ENCODE measurements at regions of chr2 and their contacts with region 1.

Region 1: GRCh38 chr2:10043906-10044601 is 704 bp downstream of the KLF11 start:
- DNase-seq: peak; percentile 75
- ATAC-seq: peak; percentile 75
- H3K4me3 ChIP-seq: peak overlapping the region; percentile 6 to 30; a peak in 1 of 4 replicates
- H3K27ac ChIP-seq: peak overlapping the region; percentile 82
- H3K4me1 ChIP-seq: peaks cover 3 to 15% of the 10 kb centered on the region in 2 experiments; a peak in 1 of 4 replicates
- H3K27me3 ChIP-seq: no peaks in the 10 kb centered on the region
- CTCF ChIP-seq: no peak
- POLR2A ChIP-seq: no peak
- RAD21 ChIP-seq: no peak

Region 2: DNA sequence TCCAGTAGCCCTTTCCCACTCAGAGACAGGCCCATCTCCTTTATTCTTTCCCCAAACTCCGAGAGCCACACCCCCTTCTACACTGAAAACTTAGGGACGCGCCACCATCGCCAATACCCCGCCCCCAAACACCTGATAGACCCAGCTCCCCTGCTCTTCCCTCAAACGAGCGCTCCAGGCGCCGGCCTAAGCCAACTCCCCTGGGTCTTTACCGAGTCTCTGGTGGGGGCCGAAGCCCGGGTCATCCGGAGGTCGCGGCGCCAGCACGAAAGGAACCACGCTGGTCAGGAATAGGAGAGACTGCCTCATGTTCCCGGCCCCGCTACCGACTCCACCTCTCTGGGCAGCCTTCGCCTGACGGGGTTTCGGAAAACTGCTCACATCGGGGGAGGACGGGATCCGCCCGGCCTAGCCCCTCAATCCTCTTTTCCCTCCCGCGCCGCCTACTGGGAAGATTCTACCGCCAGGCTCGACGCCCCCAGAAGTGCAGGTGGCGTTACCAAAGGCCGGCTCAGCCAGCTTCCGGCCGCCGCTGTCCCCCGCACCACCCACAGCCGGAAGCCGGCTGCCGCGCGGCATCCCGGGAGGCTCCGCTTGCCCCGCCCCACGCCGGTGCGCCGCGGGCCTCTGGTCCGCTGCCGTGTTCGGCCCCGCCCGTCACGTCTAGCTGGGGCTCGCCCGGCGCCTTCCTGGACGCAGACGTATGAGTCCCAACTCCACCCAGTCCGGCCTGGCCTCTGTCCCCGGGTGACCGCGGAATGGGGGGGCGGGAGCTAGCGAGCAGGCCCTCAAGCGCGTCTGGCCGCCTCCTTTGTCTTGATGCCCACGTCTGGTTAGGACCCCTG is 488.5 kb before region 1 on chr2 and contains the start of gene ADAM17:
- CTCF ChIA-PET with region 1: no interaction called
- POLR2A ChIA-PET with region 1: no interaction called
- RAD21 ChIA-PET with region 1: no interaction called
- intact Hi-C with region 1: loop called (anchors 10 kb)
- DNase-seq: peak; percentile 88
- ATAC-seq: peak; percentile 93
- H3K4me3 ChIP-seq: peak within 1 kb of the TSS; percentile 84 to 91
- H3K27ac ChIP-seq: peak within 1 kb of the TSS; percentile 90
- H3K4me1 ChIP-seq: peaks cover 36 to 65% of the 10 kb centered on the region in 2 experiments
- H3K27me3 ChIP-seq: no peaks in the 10 kb centered on the region
- CTCF ChIP-seq: peak in 1 of 3 experiments; percentile 45; a peak in 3 of 6 replicates
- POLR2A ChIP-seq: peak; percentile 77
- RAD21 ChIP-seq: peak; percentile 15; the same call in 1 of the 2 replicates
- total RNA-seq, gene ADAM17: 39.2 TPM

Region 3: DNA sequence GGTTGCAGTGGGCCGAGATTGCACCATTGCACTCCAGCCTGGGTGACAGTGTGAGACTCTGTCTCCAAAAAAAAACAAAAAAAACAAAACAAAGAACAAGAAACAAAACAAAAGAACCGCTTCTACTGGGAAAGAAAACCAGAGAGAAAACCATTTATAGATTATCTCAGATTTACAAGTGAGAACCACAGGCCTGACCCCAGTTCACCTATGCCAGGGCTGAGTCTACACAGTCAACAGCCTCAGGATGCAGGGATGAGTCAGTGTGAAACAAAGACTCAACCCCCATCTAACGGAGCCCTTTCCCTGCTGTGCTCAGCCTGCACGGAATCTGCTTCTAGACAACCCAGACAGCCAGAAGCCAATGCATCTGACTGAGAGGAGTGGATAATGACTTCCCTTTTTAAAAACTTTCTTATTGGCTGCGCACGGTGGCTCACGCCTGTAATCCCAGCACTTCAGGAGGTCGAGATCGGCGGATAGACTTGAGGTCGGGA is 387.7 kb before region 1 on chr2:
- CTCF ChIA-PET with region 1: no interaction called
- POLR2A ChIA-PET with region 1: no interaction called
- RAD21 ChIA-PET with region 1: no interaction called
- intact Hi-C with region 1: no loop called
- DNase-seq: no peak
- ATAC-seq: peak; percentile 67; the same call in 1 of the 2 replicates
- H3K4me3 ChIP-seq: no peak overlapping the region
- H3K27ac ChIP-seq: no peak overlapping the region
- H3K4me1 ChIP-seq: peaks cover 0 to 7% of the 10 kb centered on the region in 2 experiments; a peak in 1 of 4 replicates
- H3K27me3 ChIP-seq: peaks cover 3% of the 10 kb centered on the region; the same call in 1 of the 2 replicates
- CTCF ChIP-seq: no peak
- POLR2A ChIP-seq: no peak
- RAD21 ChIP-seq: no peak

Region 4: DNA sequence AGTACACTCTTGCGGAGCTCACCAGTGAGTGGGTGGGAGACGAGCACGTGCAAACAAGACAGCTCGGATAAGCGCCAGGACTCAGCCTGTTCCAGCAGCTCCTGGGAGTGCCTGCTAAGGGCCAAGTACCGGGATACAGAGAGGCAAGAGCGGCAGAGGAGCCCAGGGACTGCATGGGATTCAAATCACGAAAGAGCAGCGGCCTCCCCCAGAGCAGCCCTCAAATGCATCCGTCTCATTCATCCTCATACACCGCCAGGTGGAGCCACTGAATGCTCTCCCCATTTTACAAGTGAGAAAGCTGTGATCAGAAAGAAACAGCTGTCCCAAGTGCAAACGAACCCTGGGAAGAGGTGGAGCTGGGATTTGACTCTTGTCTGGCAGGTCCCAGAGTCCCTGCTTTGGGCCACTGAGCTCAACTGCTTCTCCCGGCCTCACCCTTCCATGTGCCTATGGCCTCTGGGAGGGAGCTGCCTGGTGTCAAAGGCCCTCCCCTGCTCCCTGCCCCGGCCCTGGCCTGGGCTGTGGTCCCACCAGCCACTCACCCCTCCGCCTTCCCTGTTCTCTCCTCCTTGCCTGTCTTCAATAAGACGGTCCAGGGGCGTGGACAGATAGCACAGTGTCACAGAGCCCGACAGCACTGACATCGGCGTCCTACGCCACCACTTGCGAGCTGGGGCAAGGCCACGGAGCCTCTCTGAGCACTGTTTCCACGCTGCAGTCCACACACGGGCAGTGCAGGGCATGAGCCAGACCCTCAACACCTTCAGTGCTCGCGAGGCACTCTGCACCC is 273.6 kb before region 1 on chr2:
- CTCF ChIA-PET with region 1: interaction called, 18 read pairs
- POLR2A ChIA-PET with region 1: no interaction called
- RAD21 ChIA-PET with region 1: no interaction called
- intact Hi-C with region 1: no loop called
- DNase-seq: peak; percentile 42
- ATAC-seq: peak; percentile 87
- H3K4me3 ChIP-seq: no peak overlapping the region
- H3K27ac ChIP-seq: no peak overlapping the region; the same call in 1 of the 2 replicates
- H3K4me1 ChIP-seq: peaks cover 17 to 29% of the 10 kb centered on the region in 2 experiments; a peak in 3 of 4 replicates
- H3K27me3 ChIP-seq: no peaks in the 10 kb centered on the region
- CTCF ChIP-seq: peak; percentile 69 to 80 (median 73)
- POLR2A ChIP-seq: no peak
- RAD21 ChIP-seq: peak; percentile 74

Region 5: GRCh38 chr2:9799665-9800632 is 244.1 kb before region 1 on chr2:
- CTCF ChIA-PET with region 1: interaction called, 36 read pairs
- POLR2A ChIA-PET with region 1: no interaction called
- RAD21 ChIA-PET with region 1: interaction called, 4 to 5 read pairs
- intact Hi-C with region 1: loop called (anchors 1 kb)
- DNase-seq: peak; percentile 72
- ATAC-seq: peak; percentile 84
- H3K4me3 ChIP-seq: no peak overlapping the region
- H3K27ac ChIP-seq: peak overlapping the region; percentile 75; the same call in 1 of the 2 replicates
- H3K4me1 ChIP-seq: peaks cover 31 to 48% of the 10 kb centered on the region in 2 experiments
- H3K27me3 ChIP-seq: no peaks in the 10 kb centered on the region
- CTCF ChIP-seq: peak in 2 of 3 experiments; percentile 97 to 99; a peak in 4 of 6 replicates
- POLR2A ChIP-seq: no peak
- RAD21 ChIP-seq: no peak

Region 6: DNA sequence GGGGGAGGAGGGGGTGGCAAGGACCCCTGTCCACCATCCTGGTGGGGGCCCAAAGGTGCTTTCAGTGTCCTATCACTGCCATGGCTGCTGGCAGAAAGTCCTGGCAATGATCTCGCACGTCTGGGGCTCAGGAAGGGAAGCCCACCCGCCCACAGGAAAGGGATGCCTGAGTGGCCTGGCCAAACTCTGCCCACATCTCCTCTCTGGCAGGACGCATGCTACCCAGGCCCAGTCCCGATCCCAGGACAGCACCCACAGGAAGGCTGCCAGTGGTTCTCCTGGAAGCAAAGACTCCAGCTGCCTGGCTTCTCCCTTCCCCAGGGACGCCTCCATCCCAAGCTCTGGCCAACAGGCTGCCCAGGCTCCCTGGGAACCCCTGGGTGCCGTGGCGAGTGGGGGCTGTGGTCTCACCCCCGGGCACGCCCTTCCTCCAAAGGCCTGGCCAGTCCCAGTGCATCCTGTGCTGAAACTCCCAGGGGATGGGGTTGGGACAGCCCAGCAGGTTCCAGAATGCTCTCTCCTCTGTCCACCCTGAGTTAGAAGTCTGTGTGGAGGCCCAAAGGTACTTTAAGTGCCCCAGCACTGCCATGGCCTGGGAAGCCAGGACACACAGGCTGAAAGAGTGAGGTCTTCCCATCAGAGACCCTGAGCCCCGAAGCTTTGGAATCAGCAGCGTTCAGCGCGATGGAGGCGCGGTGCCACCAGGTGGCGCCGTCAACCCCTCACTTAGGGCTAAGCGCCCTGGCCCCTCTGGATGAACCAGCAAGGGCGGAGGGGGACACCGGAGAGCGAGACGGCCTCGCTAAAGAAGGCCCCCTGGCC is 230.5 kb before region 1 on chr2:
- CTCF ChIA-PET with region 1: interaction called, 18 read pairs
- POLR2A ChIA-PET with region 1: no interaction called
- RAD21 ChIA-PET with region 1: no interaction called
- intact Hi-C with region 1: loop called (anchors 1 kb)
- DNase-seq: no peak
- ATAC-seq: peak; percentile 97
- H3K4me3 ChIP-seq: peak overlapping the region; percentile 11 to 16
- H3K27ac ChIP-seq: no peak overlapping the region
- H3K4me1 ChIP-seq: peaks cover 7 to 19% of the 10 kb centered on the region in 2 experiments; a peak in 3 of 4 replicates
- H3K27me3 ChIP-seq: no peaks in the 10 kb centered on the region
- CTCF ChIP-seq: peak; percentile 89 to 94 (median 93)
- POLR2A ChIP-seq: no peak
- RAD21 ChIP-seq: peak; percentile 98

Region 7: DNA sequence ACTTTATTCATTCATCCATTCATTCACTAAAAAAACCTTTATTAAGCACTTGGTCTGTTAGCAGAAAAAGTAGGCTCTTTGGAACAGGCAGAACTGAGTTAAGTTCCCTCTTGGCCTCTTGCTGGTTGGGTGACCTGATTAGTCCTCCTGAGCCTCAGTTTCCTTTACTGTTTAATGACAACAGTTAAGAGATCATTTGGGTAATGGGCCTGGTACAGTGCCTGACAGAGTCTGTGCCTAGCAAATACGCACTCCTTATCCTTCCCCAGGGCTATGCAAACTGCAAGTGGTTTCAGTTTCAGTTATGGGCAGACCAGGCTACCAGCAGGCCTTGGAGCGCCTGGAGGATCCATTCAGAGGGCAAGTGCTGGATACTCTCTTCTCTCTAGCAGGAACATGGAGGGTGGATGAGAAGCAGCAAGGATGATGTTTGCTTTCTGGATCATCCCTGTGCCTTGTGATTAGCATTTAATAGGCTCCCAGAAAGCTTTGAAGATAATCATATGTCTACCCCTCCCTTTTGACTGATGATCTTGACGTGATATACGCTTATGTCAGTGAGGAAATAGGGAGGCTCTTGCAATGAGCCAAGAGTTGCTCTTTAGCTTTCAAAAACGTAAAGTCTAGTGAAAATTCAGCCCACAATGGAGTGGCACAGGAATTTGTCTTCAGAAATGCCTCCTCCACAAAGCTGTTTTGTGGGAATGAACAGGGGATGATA is 213.2 kb before region 1 on chr2:
- CTCF ChIA-PET with region 1: no interaction called
- POLR2A ChIA-PET with region 1: no interaction called
- RAD21 ChIA-PET with region 1: no interaction called
- intact Hi-C with region 1: no loop called
- DNase-seq: no peak
- ATAC-seq: peak; percentile 62
- H3K4me3 ChIP-seq: peak overlapping the region in 1 of 2 experiments; percentile 34; a peak in 2 of 4 replicates
- H3K27ac ChIP-seq: peak overlapping the region; percentile 52
- H3K4me1 ChIP-seq: peaks cover 24 to 38% of the 10 kb centered on the region in 2 experiments
- H3K27me3 ChIP-seq: no peaks in the 10 kb centered on the region
- CTCF ChIP-seq: no peak
- POLR2A ChIP-seq: no peak
- RAD21 ChIP-seq: no peak

Region 8: DNA sequence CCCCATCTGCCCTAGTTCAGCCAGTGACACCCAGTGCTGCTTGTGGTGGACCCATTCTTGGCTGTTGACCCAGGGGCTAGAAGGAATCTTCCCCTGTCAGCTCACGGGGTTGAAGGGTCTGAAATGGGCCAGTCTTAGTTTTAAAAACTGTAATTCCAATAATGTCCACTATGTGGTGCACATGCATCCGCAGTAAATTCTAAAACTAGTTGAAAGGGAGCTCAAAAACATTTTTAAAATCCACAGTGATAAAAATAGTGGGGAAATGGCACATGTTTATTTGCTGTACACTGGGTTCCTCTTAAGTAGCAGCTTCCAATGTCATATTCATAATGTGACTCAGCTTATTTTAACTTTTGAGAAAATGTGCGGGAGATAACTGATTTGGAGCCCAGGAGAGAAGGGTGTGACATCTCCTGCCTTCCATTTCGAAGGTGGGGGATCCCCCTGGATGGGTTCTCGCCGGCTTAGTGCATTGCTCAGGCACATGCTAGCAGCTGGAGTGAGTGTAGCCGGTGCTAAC is 59.8 kb before region 1 on chr2:
- CTCF ChIA-PET with region 1: interaction called, 15 read pairs
- POLR2A ChIA-PET with region 1: no interaction called
- RAD21 ChIA-PET with region 1: no interaction called
- intact Hi-C with region 1: no loop called
- DNase-seq: peak; percentile 47
- ATAC-seq: peak; percentile 86
- H3K4me3 ChIP-seq: no peak overlapping the region
- H3K27ac ChIP-seq: no peak overlapping the region
- H3K4me1 ChIP-seq: peaks cover 10 to 22% of the 10 kb centered on the region in 2 experiments
- H3K27me3 ChIP-seq: no peaks in the 10 kb centered on the region
- CTCF ChIP-seq: peak; percentile 52 to 81 (median 53); a peak in 5 of 6 replicates
- POLR2A ChIP-seq: no peak
- RAD21 ChIP-seq: peak; percentile 65

Region 9: GRCh38 chr2:10057231-10058107 is 13.4 kb after region 1 on chr2:
- CTCF ChIA-PET with region 1: interaction called, 15 read pairs
- POLR2A ChIA-PET with region 1: no interaction called
- RAD21 ChIA-PET with region 1: no interaction called
- intact Hi-C with region 1: no loop called
- DNase-seq: no peak
- ATAC-seq: peak; percentile 96
- H3K4me3 ChIP-seq: peak overlapping the region; percentile 39 to 50
- H3K27ac ChIP-seq: peak overlapping the region; percentile 54
- H3K4me1 ChIP-seq: peaks cover 17 to 20% of the 10 kb centered on the region in 2 experiments
- H3K27me3 ChIP-seq: no peaks in the 10 kb centered on the region
- CTCF ChIP-seq: no peak
- POLR2A ChIP-seq: no peak
- RAD21 ChIP-seq: no peak